IMR-90 (cell line): ENCODE measurements at regions of chr3 and their contacts with region 1.

Region 1: GRCh38 chr3:160003520-160004128 is 15.0 kb downstream of the IL12A start:
- DNase-seq: peak; percentile 31
- ATAC-seq: peak; percentile 64
- H3K4me3 ChIP-seq: no peak overlapping the region
- H3K27ac ChIP-seq: no peak overlapping the region
- H3K4me1 ChIP-seq: 0 out of 2 replicates have a peak, but pooled peaks cover 1% of the 10 kb centered on the region
- H3K27me3 ChIP-seq: no peaks in the 10 kb centered on the region
- CTCF ChIP-seq: peak; percentile 51
- POLR2A ChIP-seq: no peak
- RAD21 ChIP-seq: peak; percentile 59

Region 2: GRCh38 chr3:159322322-159322939 is 681.2 kb before region 1 on chr3:
- CTCF ChIA-PET with region 1: no interaction called
- POLR2A ChIA-PET with region 1: no interaction called
- dilution Hi-C with region 1: no loop called
- in situ Hi-C with region 1: no loop called
- intact Hi-C with region 1: loop called (anchors 2 kb)
- DNase-seq: peak; percentile 20
- ATAC-seq: peak; percentile 77
- H3K4me3 ChIP-seq: no peak overlapping the region
- H3K27ac ChIP-seq: no peak overlapping the region
- H3K4me1 ChIP-seq: no peaks in the 10 kb centered on the region
- H3K27me3 ChIP-seq: no peaks in the 10 kb centered on the region
- CTCF ChIP-seq: peak; percentile 72
- POLR2A ChIP-seq: no peak
- RAD21 ChIP-seq: peak; percentile 59

Region 3: GRCh38 chr3:159616212-159616825 is 387.3 kb before region 1 on chr3:
- CTCF ChIA-PET with region 1: no interaction called
- POLR2A ChIA-PET with region 1: no interaction called
- dilution Hi-C with region 1: no loop called
- in situ Hi-C with region 1: no loop called
- intact Hi-C with region 1: loop called (anchors 2 kb)
- DNase-seq: peak; percentile 68
- ATAC-seq: peak; percentile 70
- H3K4me3 ChIP-seq: no peak overlapping the region
- H3K27ac ChIP-seq: no peak overlapping the region
- H3K4me1 ChIP-seq: peaks cover 14% of the 10 kb centered on the region
- H3K27me3 ChIP-seq: no peaks in the 10 kb centered on the region
- CTCF ChIP-seq: peak; percentile 67
- POLR2A ChIP-seq: no peak
- RAD21 ChIP-seq: peak; percentile 82

Region 4: GRCh38 chr3:159839561-159840379 is 163.9 kb before region 1 on chr3:
- CTCF ChIA-PET with region 1: interaction called, 10 read pairs
- POLR2A ChIA-PET with region 1: no interaction called
- dilution Hi-C with region 1: no loop called
- in situ Hi-C with region 1: no loop called
- intact Hi-C with region 1: no loop called
- DNase-seq: no peak
- ATAC-seq: no peak
- H3K4me3 ChIP-seq: no peak within 1 kb of the TSS
- H3K27ac ChIP-seq: no peak within 1 kb of the TSS
- H3K4me1 ChIP-seq: peaks cover 26% of the 10 kb centered on the region
- H3K27me3 ChIP-seq: no peaks in the 10 kb centered on the region
- CTCF ChIP-seq: no peak
- POLR2A ChIP-seq: no peak
- RAD21 ChIP-seq: no peak

Region 5: GRCh38 chr3:159988617-159989271 is 14.9 kb before region 1 on chr3 and contains the start of gene IL12A:
- CTCF ChIA-PET with region 1: interaction called, 12 read pairs
- POLR2A ChIA-PET with region 1: no interaction called
- dilution Hi-C with region 1: no loop called
- in situ Hi-C with region 1: no loop called
- intact Hi-C with region 1: no loop called
- DNase-seq: peak; percentile 71
- ATAC-seq: peak; percentile 96
- H3K4me3 ChIP-seq: peak within 1 kb of the TSS; percentile 50
- H3K27ac ChIP-seq: peak within 1 kb of the TSS; percentile 5
- H3K4me1 ChIP-seq: peaks cover 11% of the 10 kb centered on the region
- H3K27me3 ChIP-seq: no peaks in the 10 kb centered on the region
- CTCF ChIP-seq: peak; percentile 81
- POLR2A ChIP-seq: no peak
- RAD21 ChIP-seq: peak; percentile 61
- total RNA-seq, gene IL12A: 0.90 and 1.1 TPM in 2 replicates